ENCODE measurements at regions of chr3 and their contacts with region 1.

Region 1: GRCh38 chr3:19543212-19543841 is 390.7 kb downstream of the EFHB start:
- DNase-seq: no peak
- ATAC-seq: no peak
- H3K4me3 Mint-ChIP-seq: no peak overlapping the region
- H3K27ac Mint-ChIP-seq: no peak overlapping the region
- H3K4me1 Mint-ChIP-seq: no peaks in the 10 kb centered on the region
- H3K27me3 Mint-ChIP-seq: peaks cover 3% of the 10 kb centered on the region

Region 2: DNA sequence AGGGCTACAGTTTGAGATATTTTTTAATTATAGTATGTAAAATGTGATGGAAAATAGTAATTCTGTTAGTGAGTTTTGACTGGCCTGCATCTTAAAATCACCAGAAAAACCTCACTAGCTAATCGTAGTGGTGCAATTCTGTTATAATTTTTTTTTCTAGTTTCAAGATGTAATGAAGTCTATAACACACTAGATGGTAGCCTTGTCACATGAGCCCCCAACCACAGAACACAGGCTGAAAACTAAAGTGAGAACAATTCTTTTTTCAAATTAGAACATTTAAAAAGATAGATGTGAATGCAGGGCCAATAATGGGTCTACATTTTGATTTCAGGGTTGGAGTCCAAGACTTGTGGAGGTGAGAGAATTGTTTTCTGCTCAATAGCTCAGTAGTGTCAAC is 478.3 kb before region 1 on chr3:
- CTCF ChIA-PET with region 1: no interaction called
- POLR2A ChIA-PET with region 1: no interaction called
- intact Hi-C with region 1: loop called in 1 of 2 experiments (anchors 10 kb)
- DNase-seq: peak; percentile 9
- ATAC-seq: no peak
- H3K4me3 Mint-ChIP-seq: no peak overlapping the region
- H3K27ac Mint-ChIP-seq: no peak overlapping the region
- H3K4me1 Mint-ChIP-seq: no peaks in the 10 kb centered on the region
- H3K27me3 Mint-ChIP-seq: no peaks in the 10 kb centered on the region

Region 3: DNA sequence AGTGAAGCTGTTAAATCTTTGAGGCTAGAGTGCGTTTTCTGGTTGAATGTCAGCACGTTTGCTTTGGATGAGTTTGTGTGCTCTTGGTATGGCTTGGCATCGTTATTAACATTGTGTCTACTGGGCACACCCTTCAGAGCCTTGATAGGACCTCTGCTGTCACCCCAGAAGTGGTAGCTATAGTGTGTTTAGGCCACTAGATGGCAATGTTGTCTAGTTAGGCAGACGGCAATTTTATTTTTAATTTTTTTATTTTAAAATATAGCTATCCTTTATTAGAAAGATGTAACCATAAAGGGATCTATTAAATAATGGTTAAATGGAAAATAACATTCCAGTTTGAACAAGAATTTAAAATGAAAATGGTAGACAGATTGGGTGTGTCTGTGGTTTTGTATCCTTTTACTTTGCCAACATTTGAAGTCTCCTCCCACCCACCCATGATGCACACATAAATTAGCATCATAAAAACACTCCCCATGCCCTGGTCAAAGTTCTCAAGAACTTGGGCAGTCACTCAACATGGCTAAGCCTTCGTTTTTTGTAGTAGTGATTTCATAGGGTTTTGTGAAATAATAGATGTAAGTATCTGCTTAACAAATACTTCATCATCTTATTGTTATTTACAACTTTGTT is 194.3 kb before region 1 on chr3:
- CTCF ChIA-PET with region 1: no interaction called
- POLR2A ChIA-PET with region 1: interaction called, 3 read pairs
- intact Hi-C with region 1: loop called (anchors 2 to 10 kb)
- DNase-seq: peak; percentile 22
- ATAC-seq: peak; percentile 73
- H3K4me3 Mint-ChIP-seq: no peak overlapping the region
- H3K27ac Mint-ChIP-seq: no peak overlapping the region
- H3K4me1 Mint-ChIP-seq: no peaks in the 10 kb centered on the region
- H3K27me3 Mint-ChIP-seq: peaks cover 2% of the 10 kb centered on the region

Region 4: DNA sequence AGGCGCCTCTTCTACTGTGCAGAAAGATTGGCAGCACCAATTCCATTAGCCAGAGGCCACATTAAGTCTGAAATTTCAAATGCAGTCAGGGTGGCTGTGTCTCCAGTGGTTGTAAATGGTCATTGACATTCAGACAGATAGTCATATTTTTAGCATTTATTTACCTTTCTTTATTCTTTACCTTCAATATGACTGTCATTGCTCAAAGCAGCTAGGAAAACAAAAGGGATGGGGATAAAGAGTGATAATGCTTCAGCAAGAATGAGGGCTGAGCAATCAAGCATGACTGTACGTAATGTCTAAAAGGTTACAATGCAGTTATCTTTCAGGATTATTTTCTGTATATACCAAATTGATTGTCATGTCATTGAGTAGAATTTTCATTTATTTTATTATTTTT is 30.3 kb after region 1 on chr3:
- CTCF ChIA-PET with region 1: no interaction called
- POLR2A ChIA-PET with region 1: no interaction called
- intact Hi-C with region 1: no loop called
- DNase-seq: no peak
- ATAC-seq: no peak
- H3K4me3 Mint-ChIP-seq: no peak overlapping the region
- H3K27ac Mint-ChIP-seq: no peak overlapping the region
- H3K4me1 Mint-ChIP-seq: no peaks in the 10 kb centered on the region
- H3K27me3 Mint-ChIP-seq: no peaks in the 10 kb centered on the region

Measured in activated CD4-positive, alpha-beta T cell treated with anti-CD3 and anti-CD28 coated beads for 36 hours (primary cell).